ENCODE measurements at regions of chr15 and their contacts with region 1.

Region 1: GRCh38 chr15:99704444-99704838 is 28.8 kb downstream of the LYSMD4 start:
- DNase-seq: peak in 5 of 14 experiments; percentile 22 to 87 (median 81)
- ATAC-seq: peak; percentile 82
- H3K4me3 ChIP-seq: no peak overlapping the region
- H3K4me3 Mint-ChIP-seq: no peak overlapping the region
- H3K27ac ChIP-seq: no peak overlapping the region
- H3K27ac Mint-ChIP-seq: no peak overlapping the region
- H3K4me1 ChIP-seq: peaks cover 12% of the 10 kb centered on the region
- H3K4me1 Mint-ChIP-seq: peaks cover 54% of the 10 kb centered on the region
- H3K27me3 ChIP-seq: no peaks in the 10 kb centered on the region
- H3K27me3 Mint-ChIP-seq: no peaks in the 10 kb centered on the region
- CTCF ChIP-seq: peak; percentile 67

Region 2: GRCh38 chr15:99275525-99276128 is 428.8 kb before region 1 on chr15:
- CTCF ChIA-PET with region 1: interaction called, 30 read pairs
- POLR2A ChIA-PET with region 1: interaction called, 5 read pairs
- intact Hi-C with region 1: loop called (anchors 1 to 5 kb)
- DNase-seq: no peak
- ATAC-seq: no peak
- H3K4me3 ChIP-seq: no peak overlapping the region
- H3K4me3 Mint-ChIP-seq: no peak overlapping the region
- H3K27ac ChIP-seq: no peak overlapping the region
- H3K27ac Mint-ChIP-seq: no peak overlapping the region
- H3K4me1 ChIP-seq: no peaks in the 10 kb centered on the region
- H3K4me1 Mint-ChIP-seq: peaks cover 29% of the 10 kb centered on the region
- H3K27me3 ChIP-seq: no peaks in the 10 kb centered on the region
- H3K27me3 Mint-ChIP-seq: no peaks in the 10 kb centered on the region
- CTCF ChIP-seq: no peak

Region 3: GRCh38 chr15:99343881-99344551 is 360.4 kb before region 1 on chr15:
- CTCF ChIA-PET with region 1: interaction called, 17 read pairs
- POLR2A ChIA-PET with region 1: interaction called, 9 read pairs
- intact Hi-C with region 1: loop called (anchors 1 kb)
- DNase-seq: peak; percentile 33 to 70 (median 50)
- ATAC-seq: peak; percentile 83
- H3K4me3 ChIP-seq: no peak overlapping the region
- H3K4me3 Mint-ChIP-seq: no peak overlapping the region
- H3K27ac ChIP-seq: no peak overlapping the region
- H3K27ac Mint-ChIP-seq: no peak overlapping the region
- H3K4me1 ChIP-seq: no peaks in the 10 kb centered on the region
- H3K4me1 Mint-ChIP-seq: no peaks in the 10 kb centered on the region
- H3K27me3 ChIP-seq: no peaks in the 10 kb centered on the region
- H3K27me3 Mint-ChIP-seq: no peaks in the 10 kb centered on the region
- CTCF ChIP-seq: peak; percentile 74

Region 4: DNA sequence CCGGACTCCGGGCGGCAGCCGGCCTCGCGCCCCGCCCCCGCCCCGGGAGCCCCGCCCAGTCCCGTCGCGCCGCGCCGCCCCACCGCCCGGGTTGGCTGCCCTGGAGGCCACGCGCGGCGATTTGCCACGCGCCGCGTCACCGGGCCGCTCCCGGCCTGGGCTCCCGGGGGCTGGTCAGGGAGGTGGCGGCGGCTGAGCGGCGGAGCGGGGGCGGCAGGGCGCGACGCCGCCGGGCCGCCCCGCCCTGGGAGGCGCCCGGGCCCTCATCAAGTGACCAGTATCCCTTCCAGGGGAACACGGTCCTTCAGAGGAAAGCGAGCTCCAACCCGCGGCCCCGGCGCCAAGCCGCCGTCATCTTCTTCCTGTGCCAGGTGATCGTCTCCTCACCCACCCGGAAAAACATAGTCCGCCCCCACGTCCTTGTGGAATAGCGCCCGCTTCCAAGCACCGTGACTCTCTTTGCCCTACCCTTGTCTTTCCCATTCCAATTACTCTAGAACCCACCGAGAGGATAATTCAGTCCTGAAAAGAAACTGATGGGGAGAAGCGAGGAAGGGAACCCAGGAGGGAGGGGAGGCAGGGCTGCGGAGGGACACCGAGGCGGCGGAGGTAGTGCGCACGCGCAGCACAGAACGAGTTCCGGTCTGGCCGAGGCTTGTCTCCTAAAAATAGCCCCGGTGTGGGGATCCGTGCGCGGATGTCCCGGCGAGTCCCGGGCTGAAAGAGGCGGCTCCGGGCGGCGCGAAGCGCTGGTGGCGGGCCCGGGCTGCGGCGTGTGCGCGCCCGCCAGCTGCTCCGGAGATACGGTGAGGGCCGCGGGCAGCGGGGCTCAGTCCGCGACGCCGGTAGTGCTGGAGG is 138.9 kb before region 1 on chr15 and contains the start of gene MEF2A:
- CTCF ChIA-PET with region 1: interaction called, 7 read pairs
- POLR2A ChIA-PET with region 1: interaction called, 5 read pairs
- intact Hi-C with region 1: loop called in 1 of 2 experiments (anchors 1 kb)
- DNase-seq: peak; percentile 84 to 96 (median 88)
- ATAC-seq: peak; percentile 69
- H3K4me3 ChIP-seq: peak within 1 kb of the TSS; percentile 97
- H3K4me3 Mint-ChIP-seq: peak within 1 kb of the TSS; percentile 97
- H3K27ac ChIP-seq: peak within 1 kb of the TSS; percentile 86 to 94
- H3K27ac Mint-ChIP-seq: peak within 1 kb of the TSS; percentile 96
- H3K4me1 ChIP-seq: peaks cover 22% of the 10 kb centered on the region
- H3K4me1 Mint-ChIP-seq: peaks cover 57% of the 10 kb centered on the region
- H3K27me3 ChIP-seq: no peaks in the 10 kb centered on the region
- H3K27me3 Mint-ChIP-seq: no peaks in the 10 kb centered on the region
- CTCF ChIP-seq: no peak
- total RNA-seq, gene MEF2A: 23.2 to 24.9 TPM

Region 5: DNA sequence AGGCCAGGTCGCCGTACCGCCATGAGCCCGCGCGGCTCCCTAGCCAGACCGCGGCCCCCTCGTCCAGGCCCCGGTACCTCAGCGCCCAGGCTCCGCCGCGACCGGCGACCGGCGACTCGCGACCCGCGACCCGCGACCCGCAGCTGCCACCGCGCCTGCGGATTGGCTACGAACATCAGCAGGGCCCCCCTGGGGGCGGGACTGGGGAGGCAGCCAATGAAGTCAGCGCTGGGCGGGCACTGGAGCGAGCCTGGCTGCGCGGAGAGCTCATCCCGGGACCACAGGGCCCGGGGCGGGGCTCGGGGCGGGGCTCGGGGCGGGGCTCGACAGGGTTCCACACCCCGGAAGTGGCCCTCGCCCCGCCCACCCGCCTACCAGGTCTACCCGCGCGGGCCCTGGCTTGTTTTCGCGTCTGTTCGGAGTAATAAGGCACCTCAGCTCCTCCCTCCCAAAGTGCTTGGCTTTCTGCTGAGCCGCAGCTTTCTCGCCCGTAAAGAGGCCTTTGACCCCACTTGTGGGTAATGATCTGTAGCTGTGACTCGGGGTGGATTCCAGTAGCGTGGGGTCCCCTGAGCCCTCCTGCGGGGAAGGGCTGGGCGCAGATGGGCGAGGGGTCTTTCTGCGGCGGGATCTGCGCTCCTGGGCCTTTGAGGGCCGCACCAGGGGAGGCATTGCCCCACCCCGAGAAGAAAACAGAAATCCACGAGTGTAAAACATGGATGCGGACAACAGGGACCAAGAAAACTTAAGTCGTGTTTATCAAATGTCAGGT is 29.0 kb after region 1 on chr15 and contains the start of gene LYSMD4:
- CTCF ChIA-PET with region 1: interaction called, 29 read pairs
- POLR2A ChIA-PET with region 1: interaction called, 23 read pairs
- intact Hi-C with region 1: no loop called
- DNase-seq: peak; percentile 97 to 99 (median 98)
- ATAC-seq: peak; percentile 98
- H3K4me3 ChIP-seq: peak within 1 kb of the TSS; percentile 80
- H3K4me3 Mint-ChIP-seq: peak within 1 kb of the TSS; percentile 94
- H3K27ac ChIP-seq: peak within 1 kb of the TSS; percentile 81 to 85
- H3K27ac Mint-ChIP-seq: peak within 1 kb of the TSS; percentile 94
- H3K4me1 ChIP-seq: peaks cover 16% of the 10 kb centered on the region
- H3K4me1 Mint-ChIP-seq: peaks cover 28% of the 10 kb centered on the region
- H3K27me3 ChIP-seq: no peaks in the 10 kb centered on the region
- H3K27me3 Mint-ChIP-seq: no peaks in the 10 kb centered on the region
- CTCF ChIP-seq: no peak
- total RNA-seq, gene LYSMD4: 12.9 to 13.0 TPM

Region 6: DNA sequence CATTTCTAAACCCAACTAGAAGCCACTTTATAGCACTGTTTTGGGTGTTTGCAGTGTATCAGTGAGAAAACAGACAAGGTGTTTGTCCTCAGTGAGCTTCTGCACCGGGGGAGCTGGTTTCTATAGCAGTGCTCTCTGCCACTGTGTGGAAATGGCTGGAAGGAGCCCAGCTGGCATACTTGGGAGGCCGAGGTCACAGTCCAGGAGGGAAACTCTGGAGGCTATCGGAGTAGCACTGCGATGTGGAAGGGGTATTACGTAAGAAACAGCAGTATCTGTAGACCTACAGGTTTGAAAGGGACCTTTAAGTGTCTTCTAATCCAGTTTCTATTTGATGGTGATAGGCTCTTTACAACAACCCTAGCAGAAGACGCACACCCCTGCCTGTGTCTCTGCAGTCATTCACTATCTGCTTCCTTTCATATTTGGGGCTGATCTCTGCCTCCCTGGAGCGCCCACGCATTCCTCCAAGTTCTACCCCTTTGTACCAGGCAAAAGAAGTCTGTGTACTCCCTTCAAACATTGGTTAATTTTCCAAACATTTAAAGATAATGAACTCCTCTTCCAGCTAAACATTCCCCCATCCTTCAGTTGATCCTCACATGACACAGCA is 724.8 kb after region 1 on chr15:
- CTCF ChIA-PET with region 1: no interaction called
- POLR2A ChIA-PET with region 1: no interaction called
- intact Hi-C with region 1: no loop called
- DNase-seq: no peak
- ATAC-seq: no peak
- H3K4me3 ChIP-seq: no peak overlapping the region
- H3K4me3 Mint-ChIP-seq: no peak overlapping the region
- H3K27ac ChIP-seq: no peak overlapping the region
- H3K27ac Mint-ChIP-seq: no peak overlapping the region
- H3K4me1 ChIP-seq: no peaks in the 10 kb centered on the region
- H3K4me1 Mint-ChIP-seq: no peaks in the 10 kb centered on the region
- H3K27me3 ChIP-seq: no peaks in the 10 kb centered on the region
- H3K27me3 Mint-ChIP-seq: no peaks in the 10 kb centered on the region
- CTCF ChIP-seq: no peak

Measured in CD4-positive, alpha-beta T cell (primary cell).